ENCODE measurements at regions of chr4 and their contacts with region 1.

Region 1: GRCh38 chr4:445410-445809 is 53.5 kb downstream of the ZNF721 start:
- DNase-seq: no peak
- ATAC-seq: no peak

Region 2: GRCh38 chr4:373062-373839 is 72.2 kb before region 1 on chr4:
- intact Hi-C with region 1: loop called in 1 of 2 experiments (anchors 5 kb)
- DNase-seq: no peak
- ATAC-seq: no peak

Measured in left cardiac atrium (tissue), 4 donors.